Sciatic nerve (tissue), 2 donors: ENCODE measurements at regions of chr11 and their contacts with region 1.

Region 1: GRCh38 chr11:111777094-111778046 is 11.2 kb upstream of the PPP2R1B start:
- DNase-seq: no peak
- ATAC-seq: peak; percentile 89

Region 2: DNA sequence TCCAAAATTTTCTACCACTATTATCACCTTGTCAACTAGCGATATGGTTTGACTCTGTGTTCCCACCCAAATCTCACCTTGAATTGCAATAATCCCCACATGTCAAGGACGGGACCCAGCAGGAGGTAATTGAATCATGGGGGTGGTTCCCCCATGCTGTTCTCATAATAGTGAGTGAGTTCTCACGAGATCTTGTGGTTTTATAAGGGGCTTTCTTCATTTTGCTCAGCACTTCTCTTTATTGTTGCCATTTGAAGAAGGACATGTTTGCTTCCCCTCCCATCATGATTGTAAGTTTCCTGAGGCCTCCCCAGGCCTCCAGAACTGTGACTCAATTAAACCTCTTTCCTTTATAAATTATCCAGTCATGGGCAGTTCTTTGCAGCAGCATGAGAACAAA is 1757.7 kb before region 1 on chr11:
- intact Hi-C with region 1: loop called (anchors 5 kb)
- DNase-seq: no peak
- ATAC-seq: no peak

Region 3: GRCh38 chr11:111601979-111602864 is 175.1 kb before region 1 on chr11 and contains the start of gene SIK2:
- intact Hi-C with region 1: loop called (anchors 5 kb)
- DNase-seq: peak; percentile 97
- ATAC-seq: peak; percentile 97
- total RNA-seq, gene SIK2: 28.3 TPM

Region 4: GRCh38 chr11:113436672-113437252 is 1659.4 kb after region 1 on chr11:
- intact Hi-C with region 1: no loop called
- DNase-seq: no peak
- ATAC-seq: no peak